ENCODE measurements at regions of chr11 and their contacts with region 1.

Region 1: GRCh38 chr11:116062490-116063171 is 558.4 kb upstream of the CADM1 start:
- DNase-seq: no peak
- H3K4me3 ChIP-seq: no peak overlapping the region
- H3K27ac ChIP-seq: no peak overlapping the region
- H3K27me3 ChIP-seq: peaks cover 2% of the 10 kb centered on the region
- CTCF ChIP-seq: no peak

Region 2: GRCh38 chr11:115843111-115843510 is 219.5 kb before region 1 on chr11:
- CTCF ChIA-PET with region 1: no interaction called
- POLR2A ChIA-PET with region 1: no interaction called
- DNase-seq: no peak
- H3K4me3 ChIP-seq: no peak overlapping the region
- H3K27ac ChIP-seq: no peak overlapping the region
- H3K27me3 ChIP-seq: no peaks in the 10 kb centered on the region
- CTCF ChIP-seq: no peak

Region 3: DNA sequence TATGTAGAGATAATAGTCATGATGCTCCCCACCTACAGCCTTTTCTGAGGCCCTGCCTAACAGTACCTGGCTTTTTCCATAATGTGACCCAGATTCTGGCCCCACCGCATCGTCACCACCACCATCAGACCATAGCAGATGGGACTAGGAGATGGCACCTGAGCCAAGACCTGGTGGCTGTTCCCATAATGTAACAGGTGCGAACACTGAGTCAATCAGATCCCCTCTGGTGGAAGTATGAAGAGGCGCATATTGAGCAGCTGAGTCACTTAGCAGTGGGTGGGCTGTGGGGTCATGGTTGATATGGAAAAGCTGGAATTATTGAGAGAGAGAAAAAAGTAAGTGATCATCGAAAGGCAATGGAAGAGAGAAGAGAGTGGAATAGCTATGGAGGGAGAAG is 19.6 kb after region 1 on chr11:
- CTCF ChIA-PET with region 1: no interaction called
- POLR2A ChIA-PET with region 1: no interaction called
- DNase-seq: no peak
- H3K4me3 ChIP-seq: no peak overlapping the region
- H3K27ac ChIP-seq: no peak overlapping the region
- H3K27me3 ChIP-seq: peaks cover 3% of the 10 kb centered on the region
- CTCF ChIP-seq: no peak

Region 4: GRCh38 chr11:116122697-116123472 is 60.3 kb after region 1 on chr11:
- CTCF ChIA-PET with region 1: interaction called, 10 read pairs
- POLR2A ChIA-PET with region 1: no interaction called
- DNase-seq: no peak
- H3K4me3 ChIP-seq: no peak overlapping the region
- H3K27ac ChIP-seq: no peak overlapping the region
- H3K27me3 ChIP-seq: no peaks in the 10 kb centered on the region
- CTCF ChIP-seq: no peak

Region 5: DNA sequence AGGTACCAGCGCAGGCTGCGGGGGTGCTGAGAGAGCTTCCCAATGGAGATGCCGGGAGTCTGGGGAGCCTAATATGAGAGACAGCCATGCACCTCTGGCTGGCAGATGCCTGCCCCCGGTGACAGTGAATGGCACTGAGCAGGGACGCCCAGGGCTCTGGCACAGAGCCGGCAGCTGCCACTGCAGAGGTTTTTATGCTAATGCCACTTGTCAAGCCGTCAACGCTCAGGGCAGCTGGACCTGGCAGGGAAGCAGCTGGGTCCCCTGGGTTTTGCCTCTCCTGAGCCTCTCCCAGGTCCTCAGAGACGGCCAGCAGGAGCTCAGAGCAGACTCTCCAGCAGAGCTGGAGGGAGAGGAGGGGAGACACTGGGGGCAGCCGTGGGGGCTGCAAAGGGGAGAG is 136.6 kb after region 1 on chr11:
- CTCF ChIA-PET with region 1: no interaction called
- POLR2A ChIA-PET with region 1: no interaction called
- DNase-seq: no peak
- H3K4me3 ChIP-seq: no peak overlapping the region
- H3K27ac ChIP-seq: no peak overlapping the region
- H3K27me3 ChIP-seq: no peaks in the 10 kb centered on the region
- CTCF ChIP-seq: no peak